Thyroid gland (tissue), 4 donors: ENCODE measurements at regions of chr3 and their contacts with region 1.

Region 1: GRCh38 chr3:45593708-45594609 is 592 bp upstream of the LIMD1 start:
- DNase-seq: peak; percentile 79 to 80
- H3K4me3 ChIP-seq: peak overlapping the region; percentile 12 to 85 (median 79)
- H3K27ac ChIP-seq: peak overlapping the region; percentile 84 to 96 (median 85)
- H3K4me1 ChIP-seq: peaks cover 43 to 47% of the 10 kb centered on the region in 2 donors
- H3K27me3 ChIP-seq: no peaks in the 10 kb centered on the region
- CTCF ChIP-seq: no peak
- POLR2A ChIP-seq: peak; percentile 54 to 87

Region 2: DNA sequence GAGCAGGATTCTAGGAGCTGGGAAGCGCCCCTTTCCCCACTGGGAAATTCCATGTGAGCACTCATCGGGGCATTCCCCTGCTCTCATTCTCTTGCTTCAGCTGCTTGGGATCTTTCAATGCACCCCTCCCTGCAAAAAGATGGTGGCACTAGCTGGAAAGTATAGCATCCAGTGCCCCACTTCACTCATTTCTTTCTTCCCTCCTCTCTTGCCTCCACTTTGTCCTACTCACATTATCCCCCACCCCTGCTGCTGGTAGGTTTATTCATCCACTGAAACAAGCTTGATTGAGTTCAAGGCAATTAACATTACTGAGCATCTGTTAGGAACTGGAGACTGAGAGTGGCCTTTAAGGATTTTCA is 84.2 kb before region 1 on chr3:
- intact Hi-C with region 1: loop called (anchors 5 kb)
- DNase-seq: no peak
- H3K4me3 ChIP-seq: no peak overlapping the region
- H3K27ac ChIP-seq: no peak overlapping the region
- H3K4me1 ChIP-seq: no peaks in the 10 kb centered on the region
- H3K27me3 ChIP-seq: no peaks in the 10 kb centered on the region
- CTCF ChIP-seq: no peak
- POLR2A ChIP-seq: no peak

Region 3: DNA sequence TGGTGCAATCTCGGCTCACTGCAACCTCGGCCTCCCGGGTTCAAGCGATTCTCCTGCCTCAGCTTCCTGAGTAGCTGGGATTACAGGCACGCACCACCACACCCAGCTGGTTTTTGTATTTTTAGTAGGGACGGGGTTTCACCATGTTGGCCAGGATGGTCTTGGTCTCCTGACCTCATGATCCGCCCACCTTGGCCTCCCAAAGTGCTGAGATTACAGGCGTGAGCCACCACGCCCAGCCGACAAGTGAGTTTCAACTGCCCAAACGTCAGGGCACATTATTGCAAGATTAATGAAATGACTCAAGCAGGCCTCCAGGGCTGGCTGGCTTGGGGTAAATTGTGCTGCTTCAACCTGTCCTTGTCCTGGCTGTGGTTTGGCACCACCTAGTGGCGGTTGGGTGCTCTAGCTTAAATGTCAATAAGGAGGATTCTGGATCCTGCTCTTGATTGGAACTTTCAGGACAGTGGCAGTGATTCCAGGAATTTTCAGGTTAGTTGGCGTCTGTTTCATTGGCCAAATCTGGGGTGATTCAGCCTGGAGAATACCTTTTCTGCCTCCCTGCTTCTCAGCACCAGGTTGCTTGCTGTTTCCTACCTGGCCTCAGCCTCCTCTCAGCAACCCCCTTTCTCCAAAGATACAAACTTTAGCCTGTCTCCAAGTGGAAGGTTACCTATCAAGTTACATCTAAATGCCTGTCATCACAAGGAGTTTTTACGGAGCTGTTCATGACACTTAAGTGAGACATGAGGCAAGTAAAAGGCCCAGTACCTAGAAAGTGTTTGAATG is 62.8 kb after region 1 on chr3:
- intact Hi-C with region 1: loop called (anchors 2 kb)
- DNase-seq: peak; percentile 91 to 93
- H3K4me3 ChIP-seq: no peak overlapping the region
- H3K27ac ChIP-seq: peak overlapping the region in 2 of 3 donors; percentile 39 to 49
- H3K4me1 ChIP-seq: peaks cover 25 to 54% of the 10 kb centered on the region in 2 donors
- H3K27me3 ChIP-seq: no peaks in the 10 kb centered on the region
- CTCF ChIP-seq: peak; percentile 81 to 99 (median 94)
- POLR2A ChIP-seq: no peak